Activated CD4-positive, alpha-beta T cell treated with anti-CD3 and anti-CD28 coated beads, Interleukin-2, amount 10 ng/mL, durations not matched to agents 24 days and 14 days (primary cell): ENCODE measurements at regions of chr6 and their contacts with region 1.

Region 1: GRCh38 chr6:139146317-139146726 is 11.4 kb downstream of the HECA start:
- DNase-seq: peak; percentile 76
- H3K4me3 Mint-ChIP-seq: peak overlapping the region; percentile 77
- H3K27ac Mint-ChIP-seq: peak overlapping the region; percentile 94
- H3K4me1 Mint-ChIP-seq: peaks cover 84% of the 10 kb centered on the region
- H3K27me3 Mint-ChIP-seq: no peaks in the 10 kb centered on the region

Region 2: DNA sequence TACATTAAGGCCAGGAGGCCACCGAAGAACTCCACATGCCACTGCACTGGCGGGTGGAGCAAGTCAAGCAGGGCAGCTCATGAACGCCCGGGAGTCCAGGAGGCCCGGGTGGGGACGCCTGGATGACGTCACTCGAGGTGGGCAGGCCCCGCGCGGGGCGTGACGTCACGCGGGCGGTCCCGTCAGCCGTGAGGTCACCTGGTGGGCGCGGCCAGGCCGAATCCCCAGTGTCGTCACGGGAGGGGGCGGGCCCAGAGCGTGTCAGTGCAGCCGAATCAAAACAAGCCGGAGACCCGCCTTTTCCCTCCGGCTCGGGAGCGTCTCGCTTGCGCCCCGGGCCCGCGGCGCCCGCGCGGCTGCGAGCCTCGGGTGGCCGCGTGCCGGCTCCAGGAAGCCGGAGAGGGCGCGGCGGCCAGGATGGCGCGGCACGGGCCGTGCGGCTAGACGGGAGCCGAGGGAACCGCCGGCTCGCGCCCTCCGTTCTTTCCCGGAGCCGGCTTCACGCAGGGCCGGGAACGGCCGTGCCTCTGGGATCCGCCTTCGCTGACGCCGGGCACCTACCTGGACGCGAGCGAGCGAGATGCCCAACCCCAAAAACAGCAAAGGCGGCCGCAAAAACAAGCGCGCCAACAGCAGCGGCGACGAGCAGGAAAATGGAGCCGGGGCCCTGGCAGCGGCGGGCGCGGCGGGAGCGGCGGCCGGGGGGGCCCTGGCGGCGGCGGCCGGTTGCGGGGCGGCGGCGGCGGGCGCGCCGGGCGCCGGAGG is 11.3 kb before region 1 on chr6 and contains the start of gene HECA:
- intact Hi-C with region 1: loop called (anchors 1 kb)
- DNase-seq: peak; percentile 100
- H3K4me3 Mint-ChIP-seq: peak within 1 kb of the TSS; percentile 98
- H3K27ac Mint-ChIP-seq: peak within 1 kb of the TSS; percentile 97
- H3K4me1 Mint-ChIP-seq: peaks cover 60% of the 10 kb centered on the region
- H3K27me3 Mint-ChIP-seq: no peaks in the 10 kb centered on the region
- total RNA-seq, gene HECA: 45.7 and 47.7 TPM in 2 replicates

Region 3: DNA sequence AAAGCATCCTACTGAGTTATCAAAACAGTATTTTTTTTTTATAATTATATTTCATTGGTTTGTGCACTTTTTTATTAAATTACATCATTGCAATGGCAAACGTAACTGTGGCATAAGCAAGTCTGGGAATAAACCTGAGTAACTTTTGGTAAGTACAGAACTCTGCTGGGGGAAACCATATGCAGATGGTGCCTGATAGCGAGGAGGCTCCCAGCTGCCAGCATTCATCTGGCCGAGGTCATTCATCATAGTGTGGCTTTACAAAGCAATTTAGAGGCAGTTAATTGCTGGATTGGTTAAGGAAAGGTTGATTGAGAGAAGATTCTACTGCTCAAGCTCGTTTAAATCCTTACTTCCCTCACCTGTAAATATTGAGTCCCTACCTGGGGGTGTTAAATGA is 41.2 kb after region 1 on chr6:
- intact Hi-C with region 1: loop called (anchors 2 kb)
- DNase-seq: no peak
- H3K4me3 Mint-ChIP-seq: no peak overlapping the region
- H3K27ac Mint-ChIP-seq: no peak overlapping the region
- H3K4me1 Mint-ChIP-seq: peaks cover 24% of the 10 kb centered on the region
- H3K27me3 Mint-ChIP-seq: no peaks in the 10 kb centered on the region